ENCODE measurements at regions of chr3 and their contacts with region 1.

Region 1: GRCh38 chr3:188262913-188263683 is 109.1 kb downstream of the LPP start:
- DNase-seq: peak; percentile 60 to 85
- H3K4me3 ChIP-seq: no peak overlapping the region
- H3K27ac ChIP-seq: peak overlapping the region; percentile 90 to 96
- H3K4me1 ChIP-seq: peaks cover 0 to 96% (median 87%) of the 10 kb centered on the region in 4 donors
- H3K27me3 ChIP-seq: no peaks in the 10 kb centered on the region
- CTCF ChIP-seq: peak in 1 of 2 experiments; percentile 25

Region 2: GRCh38 chr3:188170461-188171459 is 92.3 kb before region 1 on chr3:
- intact Hi-C with region 1: loop called (anchors 5 kb)
- DNase-seq: no peak
- H3K4me3 ChIP-seq: no peak overlapping the region
- H3K27ac ChIP-seq: peak overlapping the region; percentile 69 to 96
- H3K4me1 ChIP-seq: peaks cover 4 to 100% (median 68%) of the 10 kb centered on the region in 4 donors
- H3K27me3 ChIP-seq: no peaks in the 10 kb centered on the region
- CTCF ChIP-seq: no peak

Region 3: DNA sequence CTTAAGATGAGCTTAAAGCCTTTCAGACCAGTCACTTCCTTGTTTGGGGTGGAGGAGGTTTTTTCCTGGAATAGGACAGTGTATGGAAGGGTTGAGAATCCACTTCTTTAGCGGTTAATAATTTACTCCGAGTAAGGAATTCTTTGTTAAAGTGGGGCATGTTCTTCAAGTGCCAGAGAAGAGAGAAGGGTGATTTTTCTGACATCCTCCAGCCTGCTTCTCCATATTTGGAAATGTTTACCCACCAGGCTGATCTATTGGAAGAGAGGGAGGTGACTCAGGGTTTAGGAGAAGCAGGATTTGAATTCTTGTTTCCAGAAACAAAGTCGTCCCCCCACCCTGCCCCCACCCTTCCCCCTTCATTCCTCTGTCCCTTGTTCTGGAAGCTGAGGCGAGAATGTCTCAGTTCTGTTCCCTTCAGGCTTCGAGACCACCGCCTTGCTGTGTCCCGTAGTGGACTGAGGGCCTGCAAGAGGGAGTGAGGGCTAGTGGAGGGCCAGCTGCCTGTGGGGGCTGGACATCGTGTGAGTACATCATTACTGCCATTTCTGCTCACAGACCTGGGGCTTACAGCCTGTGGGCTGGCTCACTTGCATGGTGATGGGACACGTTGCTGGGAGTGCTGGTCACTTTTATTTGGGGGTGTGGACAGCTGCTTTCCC is 50.7 kb before region 1 on chr3:
- intact Hi-C with region 1: loop called (anchors 5 kb)
- DNase-seq: peak; percentile 43 to 79
- H3K4me3 ChIP-seq: peak overlapping the region; percentile 50 to 54
- H3K27ac ChIP-seq: peak overlapping the region; percentile 87 to 94
- H3K4me1 ChIP-seq: peaks cover 0 to 96% (median 42%) of the 10 kb centered on the region in 4 donors
- H3K27me3 ChIP-seq: no peaks in the 10 kb centered on the region
- CTCF ChIP-seq: no peak